ENCODE measurements at regions of chr14 and their contacts with region 1.

Region 1: DNA sequence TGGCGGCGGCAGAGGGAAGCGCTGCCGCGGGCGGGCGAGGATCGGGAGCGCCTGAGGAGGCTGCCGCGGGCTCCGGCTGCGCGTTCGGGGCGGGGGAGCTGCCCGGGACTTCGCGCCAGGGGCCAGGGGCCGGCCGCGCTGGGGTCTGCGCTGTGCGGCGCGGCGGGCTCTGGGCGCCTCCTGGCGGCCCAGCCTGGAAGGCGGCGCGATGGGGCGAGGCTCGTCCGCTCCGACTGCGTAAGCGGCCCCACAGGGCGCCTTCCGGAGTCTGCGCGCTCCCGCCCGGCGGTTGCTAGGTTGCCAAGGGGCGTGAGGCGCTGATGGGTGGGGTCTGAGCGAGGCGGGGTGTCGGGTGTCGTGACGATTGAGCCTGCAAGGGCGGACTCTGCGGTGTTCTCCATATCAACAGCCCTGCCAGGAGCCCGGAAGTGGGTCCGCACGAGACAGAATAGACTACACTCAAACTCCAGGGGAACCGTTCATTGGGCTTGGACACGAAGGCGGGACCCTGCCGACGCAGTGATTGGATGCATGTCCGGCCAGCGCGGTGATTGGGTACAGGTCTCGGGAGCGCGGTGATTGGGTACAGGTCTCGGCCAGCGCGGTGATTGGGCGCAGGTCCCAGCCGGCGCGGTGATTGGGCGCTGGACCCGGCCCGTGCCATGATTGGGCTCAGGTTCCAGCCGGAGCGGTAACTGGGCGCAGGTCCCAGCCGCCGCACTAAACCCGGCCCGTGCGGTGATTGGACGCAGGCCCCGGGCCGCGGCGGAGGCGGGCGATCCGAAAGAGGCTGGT is at the start of gene TEDC1:
- DNase-seq: peak; percentile 100
- ATAC-seq: peak; percentile 80
- H3K4me3 Mint-ChIP-seq: peak within 1 kb of the TSS; percentile 81
- H3K27ac Mint-ChIP-seq: peak within 1 kb of the TSS; percentile 86
- H3K4me1 Mint-ChIP-seq: peaks cover 22% of the 10 kb centered on the region
- H3K27me3 Mint-ChIP-seq: no peaks in the 10 kb centered on the region
- total RNA-seq, gene TEDC1: 21.7 to 31.8 TPM

Region 2: GRCh38 chr14:103628684-103629502 is 1861.9 kb before region 1 on chr14 and contains the start of gene KLC1:
- CTCF ChIA-PET with region 1: no interaction called
- POLR2A ChIA-PET with region 1: no interaction called
- intact Hi-C with region 1: loop called in 1 of 2 experiments (anchors 2 kb)
- DNase-seq: peak; percentile 92
- ATAC-seq: peak; percentile 77
- H3K4me3 Mint-ChIP-seq: peak within 1 kb of the TSS; percentile 87
- H3K27ac Mint-ChIP-seq: peak within 1 kb of the TSS; percentile 81
- H3K4me1 Mint-ChIP-seq: peaks cover 35% of the 10 kb centered on the region
- H3K27me3 Mint-ChIP-seq: no peaks in the 10 kb centered on the region
- total RNA-seq, gene KLC1: 97.4 to 113 TPM

Region 3: GRCh38 chr14:104985675-104986525 is 504.9 kb before region 1 on chr14 and contains the start of gene CLBA1:
- CTCF ChIA-PET with region 1: no interaction called
- POLR2A ChIA-PET with region 1: no interaction called
- intact Hi-C with region 1: loop called in 1 of 2 experiments (anchors 1 kb)
- DNase-seq: peak; percentile 93
- ATAC-seq: peak; percentile 99
- H3K4me3 Mint-ChIP-seq: peak within 1 kb of the TSS; percentile 64
- H3K27ac Mint-ChIP-seq: peak within 1 kb of the TSS; percentile 47
- H3K4me1 Mint-ChIP-seq: peaks cover 5% of the 10 kb centered on the region
- H3K27me3 Mint-ChIP-seq: no peaks in the 10 kb centered on the region
- total RNA-seq, gene CLBA1: 1.1 to 1.9 TPM

Region 4: DNA sequence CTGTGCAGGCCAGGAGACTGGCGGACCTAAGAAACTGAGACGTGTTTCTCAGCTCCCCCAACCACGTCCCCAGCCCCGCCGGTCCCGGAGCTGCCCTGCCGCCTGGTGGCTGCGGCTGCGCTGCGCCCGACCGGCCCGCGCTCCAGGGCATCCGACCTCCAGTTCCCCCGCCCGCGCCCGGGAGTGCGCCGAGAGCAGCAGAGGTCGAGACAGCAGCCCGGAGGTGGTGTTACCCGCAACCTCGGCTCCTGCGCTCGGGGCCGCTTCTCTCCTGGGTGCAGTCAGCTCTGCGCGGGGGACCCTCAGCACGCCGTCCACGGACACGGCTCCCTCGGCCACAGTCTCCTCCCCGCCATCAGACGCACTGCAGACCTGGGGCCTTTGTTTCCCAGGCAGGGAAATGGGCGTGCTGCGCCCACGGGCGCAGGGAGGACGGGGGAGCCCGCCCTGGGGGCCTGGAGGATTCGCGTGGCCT is 403.9 kb before region 1 on chr14:
- CTCF ChIA-PET with region 1: no interaction called
- POLR2A ChIA-PET with region 1: no interaction called
- intact Hi-C with region 1: loop called in 1 of 2 experiments (anchors 5 kb)
- DNase-seq: peak; percentile 94
- ATAC-seq: peak; percentile 87
- H3K4me3 Mint-ChIP-seq: peak overlapping the region; percentile 64
- H3K27ac Mint-ChIP-seq: no peak overlapping the region
- H3K4me1 Mint-ChIP-seq: peaks cover 8% of the 10 kb centered on the region
- H3K27me3 Mint-ChIP-seq: no peaks in the 10 kb centered on the region

Region 5: DNA sequence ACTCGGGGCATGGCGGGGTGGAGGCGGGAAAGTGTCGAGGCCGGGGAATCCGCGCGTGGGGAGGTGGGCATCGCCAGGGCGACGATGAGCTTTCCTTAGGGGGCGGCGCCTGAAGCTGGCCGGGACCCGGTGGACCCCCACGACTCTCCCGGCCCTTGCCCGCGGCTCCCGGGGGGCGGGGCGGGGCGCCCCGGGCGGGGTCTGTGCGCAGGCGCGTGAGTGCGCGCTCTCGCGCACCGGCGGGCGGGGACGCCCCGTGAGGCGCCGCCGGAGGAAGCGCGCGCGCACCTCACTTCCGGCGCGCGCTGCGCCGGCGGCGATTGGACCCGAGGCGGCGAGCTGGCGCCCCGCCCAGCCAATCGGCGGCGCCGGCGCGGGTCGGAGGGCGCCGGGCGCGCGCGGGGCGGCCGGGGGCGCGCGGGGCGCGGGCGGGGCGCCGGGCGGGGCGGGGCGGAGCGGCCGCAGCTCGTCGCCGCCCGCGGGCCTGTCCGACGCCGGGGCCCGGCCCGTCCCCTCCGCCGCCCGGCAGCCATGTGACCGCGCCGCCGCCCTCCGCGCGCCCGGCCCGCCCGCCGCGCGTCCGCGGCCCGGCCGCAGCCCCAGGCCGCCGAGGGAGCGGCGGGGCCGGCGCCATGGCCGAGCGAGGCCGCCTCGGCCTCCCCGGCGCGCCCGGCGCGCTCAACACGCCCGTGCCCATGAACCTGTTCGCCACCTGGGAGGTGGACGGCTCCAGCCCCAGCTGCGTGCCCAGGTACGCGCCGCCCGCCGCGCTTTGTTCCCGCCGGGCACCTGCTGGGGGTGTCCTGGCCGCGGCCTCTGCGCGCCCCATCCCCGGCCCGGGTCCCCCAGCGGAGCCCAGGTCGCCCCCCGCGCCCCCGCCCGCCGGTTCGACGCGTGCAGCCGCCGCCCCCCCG is 176.2 kb before region 1 on chr14 and contains the start of gene PACS2:
- CTCF ChIA-PET with region 1: no interaction called
- POLR2A ChIA-PET with region 1: no interaction called
- intact Hi-C with region 1: loop called in 1 of 2 experiments (anchors 1 kb)
- DNase-seq: peak; percentile 86
- ATAC-seq: peak; percentile 79
- H3K4me3 Mint-ChIP-seq: peak within 1 kb of the TSS; percentile 84
- H3K27ac Mint-ChIP-seq: peak within 1 kb of the TSS; percentile 71
- H3K4me1 Mint-ChIP-seq: peaks cover 30% of the 10 kb centered on the region
- H3K27me3 Mint-ChIP-seq: no peaks in the 10 kb centered on the region
- total RNA-seq, gene PACS2: 30.6 to 32.9 TPM

Region 6: DNA sequence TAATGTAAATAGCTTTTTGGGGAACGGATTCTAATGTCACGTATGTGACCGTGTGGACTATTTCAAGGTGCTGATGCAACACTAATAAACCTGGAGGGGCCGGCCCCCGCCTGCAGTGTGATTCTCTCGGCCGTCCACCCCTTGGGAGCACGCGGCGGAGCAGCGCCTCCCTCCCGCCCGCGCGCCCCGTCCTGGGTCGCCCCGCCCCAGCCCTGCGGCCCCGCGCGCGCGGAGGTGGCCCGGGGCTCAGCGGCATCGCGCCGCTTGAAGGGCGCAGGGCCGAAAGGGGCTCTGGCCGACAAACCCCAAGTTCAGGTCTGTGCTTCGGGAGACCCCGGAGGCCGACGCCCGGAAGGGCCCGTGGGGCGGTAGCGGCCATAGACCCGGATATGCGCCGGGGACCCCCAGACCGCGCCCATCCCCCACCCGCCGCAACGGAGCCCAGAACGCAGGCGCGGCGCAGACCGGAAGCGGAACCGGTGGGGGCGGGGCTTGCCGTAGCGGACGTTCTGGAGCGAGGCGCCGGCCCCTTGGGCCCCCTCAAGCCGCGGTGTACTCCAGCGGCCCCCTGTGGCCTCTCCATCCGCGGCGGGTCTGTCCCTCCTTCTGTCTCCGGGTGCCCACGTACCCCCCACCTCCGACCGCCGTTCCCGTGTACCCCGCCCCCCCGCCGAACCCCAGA is 92.6 kb before region 1 on chr14 and contains the start of gene TEX22:
- CTCF ChIA-PET with region 1: interaction called, 8 read pairs
- POLR2A ChIA-PET with region 1: interaction called, 3 read pairs
- intact Hi-C with region 1: loop called (anchors 1 kb)
- DNase-seq: peak; percentile 94
- ATAC-seq: peak; percentile 86
- H3K4me3 Mint-ChIP-seq: peak within 1 kb of the TSS; percentile 85
- H3K27ac Mint-ChIP-seq: peak within 1 kb of the TSS; percentile 91
- H3K4me1 Mint-ChIP-seq: peaks cover 11% of the 10 kb centered on the region
- H3K27me3 Mint-ChIP-seq: no peaks in the 10 kb centered on the region
- total RNA-seq, gene TEX22: 1.4 to 2.4 TPM

Region 7: DNA sequence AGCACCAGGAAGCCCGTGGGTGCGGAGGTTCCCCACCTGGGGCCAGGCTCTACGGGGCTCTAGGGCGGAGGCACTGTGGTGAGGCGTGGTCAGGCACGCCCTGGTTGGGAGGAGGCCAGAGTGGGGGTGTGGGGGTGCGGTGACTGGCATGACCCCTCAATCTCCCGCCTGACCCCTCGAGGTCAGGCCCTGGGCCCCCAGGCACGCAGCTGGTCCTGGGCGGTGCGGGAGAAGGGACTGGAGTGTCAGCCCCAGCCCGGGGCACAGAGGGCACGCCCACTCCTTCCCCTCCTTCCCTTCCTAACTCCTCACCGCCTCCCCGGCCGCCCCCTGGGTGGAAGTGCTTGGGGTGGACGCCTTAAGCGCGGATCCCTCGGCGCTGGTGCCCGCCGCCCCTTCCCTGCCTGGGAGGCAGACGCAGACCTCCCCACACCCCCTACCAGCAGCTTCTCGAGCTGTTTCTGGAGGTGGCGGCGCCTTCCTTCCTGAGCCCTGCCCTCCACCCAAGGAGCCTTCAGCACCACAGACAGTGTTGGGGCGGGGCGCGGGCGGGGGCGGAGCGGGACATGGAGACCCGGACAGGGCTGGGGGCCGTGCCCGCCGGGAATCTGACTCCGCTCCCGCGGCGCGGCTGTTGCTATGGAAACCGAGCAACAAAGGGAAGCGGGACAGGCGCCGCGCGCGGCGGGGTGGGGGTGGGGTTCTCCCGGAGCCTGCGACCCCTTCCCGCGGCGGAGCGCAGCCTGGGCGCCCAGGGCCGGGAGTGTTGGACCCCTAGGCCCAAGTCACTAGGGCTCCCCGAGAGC is 16.9 kb before region 1 on chr14:
- CTCF ChIA-PET with region 1: interaction called, 11 read pairs
- POLR2A ChIA-PET with region 1: interaction called, 4 read pairs
- intact Hi-C with region 1: loop called in 1 of 2 experiments (anchors 1 kb)
- DNase-seq: peak; percentile 81
- ATAC-seq: peak; percentile 63
- H3K4me3 Mint-ChIP-seq: peak overlapping the region; percentile 33
- H3K27ac Mint-ChIP-seq: no peak overlapping the region
- H3K4me1 Mint-ChIP-seq: peaks cover 5% of the 10 kb centered on the region
- H3K27me3 Mint-ChIP-seq: no peaks in the 10 kb centered on the region